Activated CD4-positive, alpha-beta T cell treated with anti-CD3 and anti-CD28 coated beads for 36 hours (primary cell): ENCODE measurements at regions of chr21 and their contacts with region 1.

Region 1: DNA sequence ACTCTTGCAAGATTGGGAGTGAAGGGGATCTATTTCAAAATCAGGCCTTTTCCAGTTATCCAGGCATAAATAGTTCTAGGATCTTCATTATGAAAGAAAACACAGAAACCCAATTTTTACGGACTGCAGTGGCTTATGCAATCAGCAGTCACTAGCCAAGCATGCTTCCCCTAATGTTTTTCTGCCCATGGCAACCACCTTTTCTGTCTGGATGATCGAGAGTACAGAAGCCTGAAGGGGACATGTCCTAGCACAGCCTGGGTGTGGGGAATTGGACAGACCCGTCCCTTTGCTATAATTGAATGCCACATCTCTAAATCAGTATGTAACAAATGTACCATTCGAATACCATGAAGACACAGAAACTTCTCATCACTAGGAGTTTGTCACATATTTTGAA is 29.8 kb upstream of the NCAM2 start:
- DNase-seq: no peak
- ATAC-seq: no peak
- H3K4me3 Mint-ChIP-seq: no peak overlapping the region
- H3K27ac Mint-ChIP-seq: no peak overlapping the region
- H3K4me1 Mint-ChIP-seq: no peaks in the 10 kb centered on the region
- H3K27me3 Mint-ChIP-seq: no peaks in the 10 kb centered on the region

Region 2: GRCh38 chr21:20949884-20950283 is 18.5 kb before region 1 on chr21:
- CTCF ChIA-PET with region 1: no interaction called
- POLR2A ChIA-PET with region 1: no interaction called
- intact Hi-C with region 1: loop called in 1 of 2 experiments (anchors 2 kb)
- DNase-seq: no peak
- ATAC-seq: no peak
- H3K4me3 Mint-ChIP-seq: no peak overlapping the region
- H3K27ac Mint-ChIP-seq: no peak overlapping the region
- H3K4me1 Mint-ChIP-seq: no peaks in the 10 kb centered on the region
- H3K27me3 Mint-ChIP-seq: no peaks in the 10 kb centered on the region

Region 3: DNA sequence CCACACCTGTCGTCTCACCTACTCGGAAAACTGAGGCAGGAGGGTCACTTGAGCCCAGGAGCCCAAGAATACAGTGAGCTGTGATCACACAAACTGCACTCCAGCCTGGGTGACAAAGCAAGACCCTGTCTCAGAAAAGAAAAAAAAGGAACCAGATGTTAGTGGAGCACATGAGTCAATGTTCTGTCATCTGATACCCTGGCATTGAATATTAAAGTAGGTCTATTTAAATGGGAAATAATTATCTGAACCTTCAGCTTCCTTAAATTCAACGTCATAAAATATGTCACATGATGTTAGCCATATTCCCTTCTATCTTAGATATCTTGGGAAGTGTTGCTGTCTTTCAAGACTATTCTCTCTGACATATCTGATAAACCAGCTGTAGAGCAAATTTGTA is 77.1 kb after region 1 on chr21:
- CTCF ChIA-PET with region 1: no interaction called
- POLR2A ChIA-PET with region 1: no interaction called
- intact Hi-C with region 1: no loop called
- DNase-seq: no peak
- ATAC-seq: no peak
- H3K4me3 Mint-ChIP-seq: no peak overlapping the region
- H3K27ac Mint-ChIP-seq: no peak overlapping the region
- H3K4me1 Mint-ChIP-seq: no peaks in the 10 kb centered on the region
- H3K27me3 Mint-ChIP-seq: no peaks in the 10 kb centered on the region

Region 4: GRCh38 chr21:22132358-22133071 is 1164.1 kb after region 1 on chr21:
- CTCF ChIA-PET with region 1: no interaction called
- POLR2A ChIA-PET with region 1: no interaction called
- intact Hi-C with region 1: no loop called
- DNase-seq: no peak
- ATAC-seq: no peak
- H3K4me3 Mint-ChIP-seq: no peak overlapping the region
- H3K27ac Mint-ChIP-seq: no peak overlapping the region
- H3K4me1 Mint-ChIP-seq: no peaks in the 10 kb centered on the region
- H3K27me3 Mint-ChIP-seq: no peaks in the 10 kb centered on the region